SK-N-SH (cell line): ENCODE measurements at regions of chr11 and their contacts with region 1.

Region 1: GRCh38 chr11:65274735-65275682 is 13.2 kb downstream of the POLA2 start:
- DNase-seq: peak; percentile 76
- H3K4me3 ChIP-seq: no peak overlapping the region
- H3K27ac ChIP-seq: peak overlapping the region; percentile 36 to 59; a peak in 3 of 4 replicates
- H3K4me1 ChIP-seq: peaks cover 0 to 34% of the 10 kb centered on the region in 2 experiments; a peak in 3 of 4 replicates
- H3K27me3 ChIP-seq: no peaks in the 10 kb centered on the region
- CTCF ChIP-seq: peak; percentile 87
- EP300 ChIP-seq: peak in 1 of 2 experiments; percentile 53; a peak in 1 of 4 replicates
- RAD21 ChIP-seq: peak; percentile 99

Region 2: GRCh38 chr11:65261591-65262380 is 13.2 kb before region 1 on chr11 and contains the start of gene POLA2:
- CTCF ChIA-PET with region 1: interaction called, 12 read pairs
- POLR2A ChIA-PET with region 1: interaction called, 8 read pairs
- DNase-seq: peak; percentile 100
- H3K4me3 ChIP-seq: peak within 1 kb of the TSS; percentile 68 to 82
- H3K27ac ChIP-seq: peak within 1 kb of the TSS; percentile 65 to 84
- H3K4me1 ChIP-seq: peaks cover 0 to 12% of the 10 kb centered on the region in 2 experiments; a peak in 1 of 4 replicates
- H3K27me3 ChIP-seq: no peaks in the 10 kb centered on the region
- CTCF ChIP-seq: no peak
- EP300 ChIP-seq: no peak
- RAD21 ChIP-seq: no peak
- polyA plus RNA-seq, gene POLA2: 18.4 and 19.4 TPM in 2 replicates

Region 3: DNA sequence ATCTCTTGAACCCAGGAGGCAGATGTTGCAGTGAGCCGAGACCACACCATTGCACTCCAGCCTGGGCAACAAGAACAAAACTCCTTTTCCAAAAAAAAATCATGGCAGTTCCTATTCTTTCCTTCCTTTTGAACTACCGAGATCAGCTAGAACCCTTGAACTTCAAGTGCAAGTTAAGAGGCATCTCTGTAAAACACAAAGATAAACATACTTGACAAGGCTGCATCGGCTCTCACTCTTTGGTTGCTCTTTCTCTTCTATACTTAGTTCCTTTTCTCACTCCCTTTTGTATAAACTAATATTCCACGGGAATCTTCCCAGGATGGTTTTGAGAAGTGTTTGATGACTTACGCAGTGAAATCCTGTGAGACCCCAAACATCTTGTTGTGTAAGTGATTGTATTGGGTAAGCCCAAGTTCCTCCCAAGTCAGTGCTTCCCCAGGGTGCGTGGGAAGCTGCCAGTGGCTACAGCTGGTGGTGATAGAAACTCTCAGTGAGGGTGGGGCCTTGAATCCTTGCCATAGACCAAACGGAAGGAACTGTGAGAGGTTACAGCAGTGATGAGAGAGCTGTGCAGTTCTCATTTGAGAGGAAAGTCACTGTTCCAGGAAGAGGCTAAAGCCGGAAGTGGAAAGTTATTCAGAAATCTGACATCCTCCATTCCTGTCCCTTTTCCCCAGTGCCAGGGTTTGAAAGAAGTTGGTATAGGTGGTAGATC is 15.6 kb after region 1 on chr11:
- CTCF ChIA-PET with region 1: interaction called, 24 read pairs
- POLR2A ChIA-PET with region 1: interaction called, 4 read pairs
- DNase-seq: no peak
- H3K4me3 ChIP-seq: no peak overlapping the region
- H3K27ac ChIP-seq: peak overlapping the region; percentile 18 to 24; a peak in 2 of 4 replicates
- H3K4me1 ChIP-seq: peaks cover 14 to 38% of the 10 kb centered on the region in 2 experiments; a peak in 3 of 4 replicates
- H3K27me3 ChIP-seq: no peaks in the 10 kb centered on the region
- CTCF ChIP-seq: no peak
- EP300 ChIP-seq: no peak
- RAD21 ChIP-seq: no peak

Region 4: DNA sequence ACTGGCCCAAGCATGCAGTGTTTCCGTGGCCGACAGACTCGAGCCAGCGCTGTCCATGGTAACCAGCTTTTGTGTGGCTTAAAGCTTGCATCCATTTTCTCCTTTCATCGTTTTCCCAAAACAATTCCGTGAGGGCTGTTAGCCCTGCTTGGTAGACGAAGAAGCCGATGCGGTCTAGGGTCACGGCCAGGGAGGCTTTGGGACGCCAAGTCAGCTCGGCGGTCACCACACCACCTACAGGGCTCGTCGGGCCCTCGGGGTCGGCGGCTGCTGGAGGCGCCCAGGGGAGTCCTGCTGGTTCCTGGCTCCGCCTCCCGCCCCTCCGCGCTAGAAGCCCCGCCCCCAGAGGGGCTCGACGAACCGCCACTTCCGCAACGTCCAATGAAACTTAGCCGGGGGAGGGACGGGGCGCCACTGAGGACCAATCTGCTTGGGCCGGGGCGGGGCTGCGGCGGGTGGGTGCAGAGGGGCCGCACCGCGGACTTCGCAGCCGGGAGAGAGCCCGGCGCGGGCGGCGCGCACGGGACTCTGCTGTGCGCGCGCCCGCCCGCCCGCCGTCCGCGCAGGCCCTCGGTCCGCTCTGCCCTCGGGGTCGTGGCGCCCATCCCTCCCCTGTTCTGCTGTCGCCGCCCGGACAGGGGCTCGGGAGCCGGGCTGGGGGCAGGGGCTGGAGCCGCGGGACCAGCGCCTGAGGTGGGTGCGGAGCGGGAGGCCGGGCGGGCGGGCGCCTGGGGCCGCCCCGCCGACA is 79.4 kb after region 1 on chr11 and contains the start of gene TIGD3:
- CTCF ChIA-PET with region 1: interaction called, 19 read pairs
- POLR2A ChIA-PET with region 1: no interaction called
- DNase-seq: peak; percentile 99
- H3K4me3 ChIP-seq: peak within 1 kb of the TSS; percentile 71 to 74
- H3K27ac ChIP-seq: peak within 1 kb of the TSS; percentile 34 to 83
- H3K4me1 ChIP-seq: peaks cover 0 to 20% of the 10 kb centered on the region in 2 experiments; a peak in 1 of 4 replicates
- H3K27me3 ChIP-seq: no peaks in the 10 kb centered on the region
- CTCF ChIP-seq: 0 out of 2 replicates have a peak, but pooled peaks have one; percentile 13
- EP300 ChIP-seq: no peak
- RAD21 ChIP-seq: no peak
- polyA plus RNA-seq, gene TIGD3: 0.34 and 0.41 TPM in 2 replicates